Esophagus squamous epithelium (tissue), 5 donors: ENCODE measurements at regions of chr6 and their contacts with region 1.

Region 1: GRCh38 chr6:32413427-32414047 is 6.6 kb upstream of the BTNL2 start:
- DNase-seq: no peak
- H3K4me3 ChIP-seq: no peak overlapping the region
- H3K27ac ChIP-seq: no peak overlapping the region
- H3K4me1 ChIP-seq: peaks cover 0 to 8% (median 0%) of the 10 kb centered on the region in 3 donors
- H3K27me3 ChIP-seq: peaks cover 0 to 76% (median 0%) of the 10 kb centered on the region in 4 donors
- CTCF ChIP-seq: peak; percentile 86 to 96 (median 91)
- POLR2A ChIP-seq: no peak

Region 2: DNA sequence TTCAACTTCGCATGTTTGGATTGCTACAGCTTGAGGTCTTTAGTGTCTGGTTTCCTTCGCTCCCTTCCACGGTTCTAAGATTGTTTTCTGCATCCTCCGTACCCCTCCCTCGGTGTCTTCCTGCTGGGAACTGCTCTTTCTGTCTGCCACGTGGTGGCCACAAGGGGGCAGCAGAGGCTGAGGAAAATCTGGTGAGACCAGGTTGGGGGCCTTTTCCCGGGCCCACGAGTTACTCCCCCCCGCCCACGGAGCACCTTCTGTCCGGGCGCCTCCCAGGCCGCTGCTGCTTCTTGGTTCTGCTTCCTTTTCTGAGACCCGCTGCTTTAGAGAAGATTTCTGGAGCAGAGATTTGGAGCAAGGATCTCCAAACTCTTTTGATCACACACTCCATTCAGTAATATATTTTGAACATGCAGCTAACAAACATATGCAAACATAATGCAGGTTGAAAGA is 168.6 kb before region 1 on chr6:
- intact Hi-C with region 1: loop called (anchors 5 kb)
- DNase-seq: no peak
- H3K4me3 ChIP-seq: peak overlapping the region in 3 of 4 donors; percentile 21 to 44 (median 35)
- H3K27ac ChIP-seq: peak overlapping the region; percentile 44 to 83 (median 56)
- H3K4me1 ChIP-seq: peaks cover 5 to 22% (median 5%) of the 10 kb centered on the region in 3 donors
- H3K27me3 ChIP-seq: no peaks in the 10 kb centered on the region
- CTCF ChIP-seq: peak; percentile 84 to 94 (median 92)
- POLR2A ChIP-seq: no peak

Region 3: GRCh38 chr6:32664827-32665362 is 251.4 kb after region 1 on chr6:
- intact Hi-C with region 1: no loop called
- DNase-seq: no peak
- H3K4me3 ChIP-seq: peak overlapping the region in 1 of 4 donors; percentile 51
- H3K27ac ChIP-seq: no peak overlapping the region
- H3K4me1 ChIP-seq: no peaks in the 10 kb centered on the region
- H3K27me3 ChIP-seq: no peaks in the 10 kb centered on the region
- CTCF ChIP-seq: no peak
- POLR2A ChIP-seq: no peak

Region 4: GRCh38 chr6:32700391-32701040 is 287.0 kb after region 1 on chr6:
- intact Hi-C with region 1: loop called (anchors 5 kb)
- DNase-seq: no peak
- H3K4me3 ChIP-seq: no peak overlapping the region
- H3K27ac ChIP-seq: no peak overlapping the region
- H3K4me1 ChIP-seq: no peaks in the 10 kb centered on the region
- H3K27me3 ChIP-seq: peaks cover 0 to 54% (median 0%) of the 10 kb centered on the region in 4 donors
- CTCF ChIP-seq: peak; percentile 14 to 73 (median 66)
- POLR2A ChIP-seq: no peak

Region 5: DNA sequence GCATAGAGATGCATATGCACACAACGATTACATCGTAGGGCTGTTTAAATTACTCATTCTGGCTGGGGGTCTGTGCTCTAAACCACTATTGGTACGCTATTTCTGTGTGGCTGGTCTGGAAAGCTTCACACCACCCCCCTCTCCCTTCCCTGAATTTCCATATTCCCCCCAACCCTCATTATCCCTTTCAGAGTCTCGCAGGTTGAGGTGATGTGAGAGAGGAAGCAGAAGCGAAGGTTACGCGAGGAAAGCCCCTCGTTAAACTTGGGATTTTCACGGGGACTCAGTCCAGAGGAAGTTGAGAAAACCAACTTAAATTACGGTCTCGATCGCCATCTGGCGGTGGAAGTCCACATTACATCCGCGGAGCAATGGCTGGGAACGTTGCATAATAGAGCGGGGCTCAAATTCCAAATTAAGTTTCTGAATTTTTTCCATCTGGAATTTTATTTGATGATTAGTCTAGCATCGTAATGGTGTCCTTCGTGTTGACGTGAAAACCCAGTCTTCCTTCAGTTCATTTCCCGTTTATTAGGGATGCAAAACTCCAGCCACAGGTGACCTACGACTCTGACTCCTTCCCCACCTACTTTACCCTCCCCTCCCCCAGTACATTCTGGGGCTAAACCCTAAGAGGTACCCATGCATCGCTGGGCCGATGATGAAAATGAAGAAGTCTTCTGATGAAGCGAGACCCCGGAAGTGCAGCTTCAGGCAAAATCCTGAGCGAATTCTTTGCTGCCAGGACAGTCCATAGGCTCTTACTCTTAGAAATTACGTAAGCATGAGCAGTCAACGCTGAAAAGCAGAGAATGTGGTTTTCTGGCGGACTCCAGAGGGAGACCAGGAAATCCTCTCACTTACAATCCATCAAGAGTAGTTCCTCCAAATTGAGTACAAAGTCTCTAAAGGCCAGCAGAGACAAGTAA is 383.6 kb after region 1 on chr6:
- intact Hi-C with region 1: loop called (anchors 5 kb)
- DNase-seq: no peak
- H3K4me3 ChIP-seq: peak overlapping the region in 3 of 4 donors; percentile 11 to 49 (median 15)
- H3K27ac ChIP-seq: peak overlapping the region in 1 of 4 donors; percentile 2
- H3K4me1 ChIP-seq: peaks cover 3 to 12% (median 7%) of the 10 kb centered on the region in 3 donors
- H3K27me3 ChIP-seq: peaks cover 0 to 92% (median 4%) of the 10 kb centered on the region in 4 donors
- CTCF ChIP-seq: peak; percentile 91 to 97 (median 94)
- POLR2A ChIP-seq: no peak